PC-3 (cell line): ENCODE measurements at regions of chr15 and their contacts with region 1.

Region 1: GRCh38 chr15:50003786-50004334 is 115.2 kb downstream of the ATP8B4 start:
- DNase-seq: peak; percentile 87
- ATAC-seq: peak; percentile 100
- H3K4me3 ChIP-seq: no peak overlapping the region
- H3K27ac ChIP-seq: no peak overlapping the region; the same call in 1 of the 2 replicates
- H3K4me1 ChIP-seq: peaks cover 10% of the 10 kb centered on the region; the same call in 1 of the 2 replicates
- H3K27me3 ChIP-seq: no peaks in the 10 kb centered on the region
- CTCF ChIP-seq: peak; percentile 78

Region 2: GRCh38 chr15:49235446-49236124 is 768.3 kb before region 1 on chr15:
- CTCF ChIA-PET with region 1: no interaction called
- POLR2A ChIA-PET with region 1: no interaction called
- intact Hi-C with region 1: loop called (anchors 1 kb)
- DNase-seq: peak; percentile 60
- ATAC-seq: peak; percentile 88
- H3K4me3 ChIP-seq: no peak overlapping the region
- H3K27ac ChIP-seq: 0 out of 2 replicates have a peak overlapping the region, but pooled peaks have one; percentile 10
- H3K4me1 ChIP-seq: peaks cover 5% of the 10 kb centered on the region; the same call in 1 of the 2 replicates
- H3K27me3 ChIP-seq: no peaks in the 10 kb centered on the region
- CTCF ChIP-seq: peak; percentile 81

Region 3: GRCh38 chr15:49370782-49371181 is 633.1 kb before region 1 on chr15:
- CTCF ChIA-PET with region 1: no interaction called
- POLR2A ChIA-PET with region 1: no interaction called
- intact Hi-C with region 1: loop called (anchors 2 kb)
- DNase-seq: peak; percentile 52
- ATAC-seq: peak; percentile 27; the same call in 1 of the 2 replicates
- H3K4me3 ChIP-seq: no peak overlapping the region
- H3K27ac ChIP-seq: no peak overlapping the region
- H3K4me1 ChIP-seq: no peaks in the 10 kb centered on the region
- H3K27me3 ChIP-seq: no peaks in the 10 kb centered on the region
- CTCF ChIP-seq: peak; percentile 58

Region 4: DNA sequence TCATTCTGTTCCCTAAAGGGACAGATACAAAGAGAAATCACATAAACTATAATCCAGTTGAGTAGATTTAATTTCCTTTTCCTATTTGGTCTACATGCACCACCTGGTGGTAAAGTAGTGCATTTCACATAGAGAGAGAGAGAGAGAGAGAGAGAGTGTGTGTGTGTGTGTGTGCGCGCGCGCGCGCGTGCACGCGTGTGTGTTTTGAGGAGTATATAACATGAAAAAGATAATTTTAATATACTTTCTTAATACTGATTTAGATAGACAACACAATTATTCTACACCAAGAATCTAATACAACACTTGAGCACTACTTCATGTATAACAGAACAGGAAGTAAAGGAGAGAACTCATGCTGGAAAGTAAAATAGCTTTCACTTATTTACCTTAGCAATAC is 581.9 kb before region 1 on chr15:
- CTCF ChIA-PET with region 1: interaction called, 3 read pairs
- POLR2A ChIA-PET with region 1: no interaction called
- intact Hi-C with region 1: loop called (anchors 2 kb)
- DNase-seq: peak; percentile 68
- ATAC-seq: peak; percentile 53
- H3K4me3 ChIP-seq: no peak overlapping the region
- H3K27ac ChIP-seq: no peak overlapping the region
- H3K4me1 ChIP-seq: no peaks in the 10 kb centered on the region
- H3K27me3 ChIP-seq: no peaks in the 10 kb centered on the region
- CTCF ChIP-seq: peak; percentile 79

Region 5: GRCh38 chr15:49627407-49627877 is 376.4 kb before region 1 on chr15:
- CTCF ChIA-PET with region 1: no interaction called
- POLR2A ChIA-PET with region 1: no interaction called
- intact Hi-C with region 1: loop called (anchors 5 kb)
- DNase-seq: peak; percentile 85
- ATAC-seq: peak; percentile 95
- H3K4me3 ChIP-seq: peak overlapping the region; percentile 9; the same call in 1 of the 2 replicates
- H3K27ac ChIP-seq: peak overlapping the region; percentile 90
- H3K4me1 ChIP-seq: peaks cover 20% of the 10 kb centered on the region
- H3K27me3 ChIP-seq: no peaks in the 10 kb centered on the region
- CTCF ChIP-seq: no peak

Region 6: DNA sequence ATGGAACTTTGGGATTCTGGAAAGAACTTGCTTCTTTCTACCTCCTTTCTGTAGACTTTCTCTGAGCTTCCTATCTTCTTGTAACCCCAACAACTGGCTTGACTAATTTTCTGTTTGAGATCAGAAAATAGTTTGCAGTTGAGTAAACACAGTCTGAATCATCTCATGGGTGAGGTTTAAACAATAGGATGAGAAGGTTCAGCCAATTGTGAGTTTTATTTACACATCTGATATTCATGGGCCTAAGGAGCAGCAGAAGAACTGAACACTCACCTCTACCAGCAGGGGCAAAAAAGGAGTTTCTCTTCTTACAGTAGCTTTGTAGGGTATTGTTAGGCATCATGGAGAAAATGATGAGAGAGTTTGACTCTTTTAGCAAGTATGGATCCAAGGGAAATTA is 328.8 kb before region 1 on chr15:
- CTCF ChIA-PET with region 1: no interaction called
- POLR2A ChIA-PET with region 1: no interaction called
- intact Hi-C with region 1: loop called (anchors 5 kb)
- DNase-seq: peak; percentile 88
- ATAC-seq: peak; percentile 98
- H3K4me3 ChIP-seq: peak overlapping the region; percentile 32; the same call in 1 of the 2 replicates
- H3K27ac ChIP-seq: peak overlapping the region; percentile 88
- H3K4me1 ChIP-seq: peaks cover 29% of the 10 kb centered on the region
- H3K27me3 ChIP-seq: no peaks in the 10 kb centered on the region
- CTCF ChIP-seq: peak; percentile 45; the same call in 1 of the 2 replicates

Region 7: DNA sequence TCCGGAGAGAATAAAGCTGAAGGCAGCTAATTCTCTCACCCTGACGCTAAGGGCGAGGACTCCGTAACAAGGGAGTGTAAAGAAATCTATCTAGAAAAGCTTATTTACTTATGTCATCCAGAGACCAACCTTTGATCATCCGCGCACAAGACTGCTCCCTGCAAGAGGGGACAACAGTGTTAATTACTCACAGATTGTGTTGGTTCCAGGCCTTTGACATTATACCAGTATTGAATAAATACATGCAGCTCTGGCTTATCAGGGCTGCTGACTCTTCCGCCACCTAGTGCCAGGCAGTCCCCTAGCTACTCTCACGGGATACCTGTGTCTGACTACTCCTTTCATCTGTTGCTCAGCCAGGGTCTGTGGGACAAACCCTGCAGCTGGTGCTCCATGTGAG is 171.3 kb before region 1 on chr15:
- CTCF ChIA-PET with region 1: no interaction called
- POLR2A ChIA-PET with region 1: no interaction called
- intact Hi-C with region 1: no loop called
- DNase-seq: peak; percentile 52
- ATAC-seq: peak; percentile 83
- H3K4me3 ChIP-seq: no peak overlapping the region
- H3K27ac ChIP-seq: peak overlapping the region; percentile 80
- H3K4me1 ChIP-seq: peaks cover 18% of the 10 kb centered on the region
- H3K27me3 ChIP-seq: no peaks in the 10 kb centered on the region
- CTCF ChIP-seq: peak; percentile 58

Region 8: DNA sequence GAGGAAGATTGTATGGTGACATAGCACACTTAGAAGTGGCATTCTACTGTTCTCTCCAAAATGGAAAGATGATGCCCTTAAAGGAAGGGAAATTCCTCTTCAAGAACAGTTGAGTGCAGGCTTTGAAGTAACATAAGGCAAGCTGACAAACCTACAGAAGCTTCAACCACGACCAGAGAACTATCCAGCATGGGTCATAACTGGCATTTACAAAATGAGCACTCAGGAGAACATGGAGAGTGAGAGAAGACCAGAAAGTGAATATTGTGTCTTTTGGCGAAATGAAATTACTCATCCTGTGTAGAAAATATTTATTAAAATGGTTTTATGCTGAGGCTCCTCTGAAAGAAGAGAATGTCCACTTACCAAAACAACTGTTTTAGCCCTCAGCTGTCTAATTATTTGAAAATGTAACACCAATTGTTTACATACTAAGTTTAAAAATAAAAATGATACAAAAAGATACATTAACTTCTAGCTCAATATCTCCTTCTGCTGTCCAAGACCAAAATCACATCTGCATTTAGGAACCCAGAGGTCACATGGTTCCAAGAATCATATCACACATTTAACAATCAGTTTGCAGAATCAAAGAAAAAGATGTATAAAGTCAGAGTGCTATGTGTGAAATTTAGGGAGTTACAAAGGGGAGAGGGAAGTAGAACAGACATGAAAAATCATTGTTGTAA is 101.7 kb before region 1 on chr15:
- CTCF ChIA-PET with region 1: interaction called, 3 read pairs
- POLR2A ChIA-PET with region 1: interaction called, 5 read pairs
- intact Hi-C with region 1: loop called (anchors 2 kb)
- DNase-seq: peak; percentile 22
- ATAC-seq: peak; percentile 37
- H3K4me3 ChIP-seq: no peak overlapping the region
- H3K27ac ChIP-seq: peak overlapping the region; percentile 53
- H3K4me1 ChIP-seq: peaks cover 27% of the 10 kb centered on the region
- H3K27me3 ChIP-seq: no peaks in the 10 kb centered on the region
- CTCF ChIP-seq: peak; percentile 65; the same call in 1 of the 2 replicates